ENCODE measurements at regions of chr5 and their contacts with region 1.

Region 1: GRCh38 chr5:137545956-137546355 is 46.8 kb upstream of the SPOCK1 start:
- DNase-seq: no peak
- H3K4me3 Mint-ChIP-seq: no peak overlapping the region
- H3K27ac Mint-ChIP-seq: no peak overlapping the region
- H3K4me1 Mint-ChIP-seq: no peaks in the 10 kb centered on the region
- H3K27me3 Mint-ChIP-seq: peaks cover 73% of the 10 kb centered on the region
- CTCF ChIP-seq: no peak

Region 2: DNA sequence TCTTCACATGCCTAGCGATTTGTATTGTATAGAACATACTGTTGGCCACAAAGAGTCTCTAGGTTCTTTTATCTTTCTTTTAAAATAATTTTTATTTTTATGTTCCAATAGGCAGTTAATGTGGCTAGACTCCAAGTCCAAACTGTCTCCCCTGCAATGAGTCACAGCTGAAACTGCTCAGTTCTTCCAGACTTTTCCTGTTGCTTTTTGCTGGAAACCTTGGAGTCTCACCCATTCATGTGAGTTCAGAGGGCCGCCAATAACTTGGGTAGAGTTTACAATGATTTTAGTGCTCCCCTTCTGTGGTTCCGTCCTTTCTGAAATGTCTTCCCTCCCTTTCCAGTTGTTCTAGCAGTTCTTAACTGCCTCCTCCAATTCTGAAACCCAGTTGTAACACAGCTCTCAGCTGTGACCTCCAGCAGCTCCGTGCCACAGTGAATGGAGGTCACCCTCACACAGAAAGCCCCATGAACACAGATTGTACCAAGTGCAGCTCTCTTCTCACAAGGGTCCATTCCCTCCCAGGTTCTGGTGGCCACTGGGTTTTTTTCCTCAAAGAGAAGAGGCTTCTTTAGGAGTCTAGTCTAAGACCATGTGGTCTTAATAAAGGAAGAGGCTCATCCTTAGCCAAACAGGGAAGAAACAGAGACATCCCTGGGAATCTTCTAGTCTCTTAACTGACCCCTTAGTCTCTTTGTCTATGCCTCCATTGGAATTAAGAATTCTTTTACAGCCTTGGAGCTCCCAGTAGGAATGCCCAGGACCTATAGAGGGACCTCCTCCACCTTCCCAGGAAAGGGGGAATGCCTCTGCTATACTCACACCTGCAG is 245.3 kb before region 1 on chr5:
- CTCF ChIA-PET with region 1: no interaction called
- intact Hi-C with region 1: no loop called
- DNase-seq: no peak
- H3K4me3 Mint-ChIP-seq: no peak overlapping the region
- H3K27ac Mint-ChIP-seq: no peak overlapping the region
- H3K4me1 Mint-ChIP-seq: no peaks in the 10 kb centered on the region
- H3K27me3 Mint-ChIP-seq: peaks cover 13% of the 10 kb centered on the region
- CTCF ChIP-seq: no peak

Region 3: GRCh38 chr5:137516961-137517360 is 29.0 kb before region 1 on chr5:
- CTCF ChIA-PET with region 1: no interaction called
- intact Hi-C with region 1: loop called (anchors 1 kb)
- DNase-seq: no peak
- H3K4me3 Mint-ChIP-seq: no peak overlapping the region
- H3K27ac Mint-ChIP-seq: no peak overlapping the region
- H3K4me1 Mint-ChIP-seq: no peaks in the 10 kb centered on the region
- H3K27me3 Mint-ChIP-seq: peaks cover 83% of the 10 kb centered on the region
- CTCF ChIP-seq: no peak

Region 4: DNA sequence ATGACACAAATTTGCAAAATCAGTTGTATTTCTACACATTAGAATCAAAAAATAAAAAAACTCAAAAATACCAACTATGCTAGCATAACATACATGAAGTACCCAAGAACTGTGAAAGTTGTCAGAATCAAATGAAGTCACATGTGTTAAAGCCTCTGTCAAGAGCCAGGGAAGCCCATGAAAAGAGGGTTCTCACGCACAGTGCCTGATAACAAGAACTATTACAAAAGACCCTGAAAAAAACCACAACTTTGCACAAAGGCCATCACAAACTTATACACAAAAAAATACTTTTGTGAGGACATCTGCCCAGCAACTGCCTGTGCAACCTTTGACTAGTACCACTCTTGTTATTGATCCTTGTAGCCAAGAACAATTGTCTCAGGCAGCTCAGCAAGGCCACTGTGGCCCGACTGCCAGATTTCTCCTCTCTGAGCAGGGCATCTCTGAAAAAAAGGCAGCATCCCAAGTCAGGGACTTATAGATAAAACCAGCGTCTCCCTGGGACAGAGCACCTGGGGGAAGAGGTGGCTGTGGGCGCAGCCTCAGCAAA is 237.1 kb after region 1 on chr5:
- CTCF ChIA-PET with region 1: no interaction called
- intact Hi-C with region 1: no loop called
- DNase-seq: no peak
- H3K4me3 Mint-ChIP-seq: no peak overlapping the region
- H3K27ac Mint-ChIP-seq: no peak overlapping the region
- H3K4me1 Mint-ChIP-seq: peaks cover 9% of the 10 kb centered on the region
- H3K27me3 Mint-ChIP-seq: peaks cover 13% of the 10 kb centered on the region
- CTCF ChIP-seq: no peak

Measured in Calu3 (cell line).